ENCODE measurements at regions of chr3 and their contacts with region 1.

Region 1: DNA sequence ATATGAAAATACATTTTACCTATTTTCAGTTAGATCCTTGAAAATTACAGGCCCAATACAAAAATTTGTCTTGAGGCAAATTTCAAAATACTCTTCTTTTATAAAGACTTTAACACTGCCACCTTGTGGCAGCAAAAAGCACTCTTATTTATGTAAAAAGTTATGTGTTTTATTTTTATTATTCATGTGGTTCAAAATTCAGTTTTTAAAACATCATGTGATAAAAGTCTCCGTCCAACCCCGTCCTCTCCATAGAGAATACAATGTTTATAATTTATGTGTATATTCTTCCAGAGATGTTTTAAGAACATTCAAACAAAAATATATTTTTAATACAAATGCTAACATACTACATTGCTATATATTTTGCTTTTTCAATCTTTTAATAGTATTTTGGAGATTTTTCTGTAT is 36.9 kb upstream of the TRIM59 start:
- DNase-seq: no peak
- H3K4me3 ChIP-seq: no peak overlapping the region
- H3K27ac ChIP-seq: no peak overlapping the region
- H3K4me1 ChIP-seq: no peaks in the 10 kb centered on the region
- H3K27me3 ChIP-seq: no peaks in the 10 kb centered on the region
- CTCF ChIP-seq: peak in 1 of 3 experiments; percentile 27; a peak in 2 of 4 replicates
- EP300 ChIP-seq: no peak
- POLR2A ChIP-seq: no peak
- RAD21 ChIP-seq: peak in 1 of 2 experiments; percentile 19; a peak in 3 of 4 replicates

Region 2: GRCh38 chr3:160498202-160498601 is 11.7 kb after region 1 on chr3:
- CTCF ChIA-PET with region 1: interaction called, 10 read pairs
- POLR2A ChIA-PET with region 1: interaction called, 9 read pairs
- DNase-seq: no peak
- H3K4me3 ChIP-seq: no peak overlapping the region
- H3K27ac ChIP-seq: no peak overlapping the region
- H3K4me1 ChIP-seq: no peaks in the 10 kb centered on the region
- H3K27me3 ChIP-seq: peaks cover 0 to 1% (median 0%) of the 10 kb centered on the region in 4 experiments; a peak in 1 of 7 replicates
- CTCF ChIP-seq: no peak
- EP300 ChIP-seq: no peak
- POLR2A ChIP-seq: no peak
- RAD21 ChIP-seq: no peak

Measured in H1 (cell line).